ENCODE measurements at regions of chr1 and their contacts with region 1.

Region 1: DNA sequence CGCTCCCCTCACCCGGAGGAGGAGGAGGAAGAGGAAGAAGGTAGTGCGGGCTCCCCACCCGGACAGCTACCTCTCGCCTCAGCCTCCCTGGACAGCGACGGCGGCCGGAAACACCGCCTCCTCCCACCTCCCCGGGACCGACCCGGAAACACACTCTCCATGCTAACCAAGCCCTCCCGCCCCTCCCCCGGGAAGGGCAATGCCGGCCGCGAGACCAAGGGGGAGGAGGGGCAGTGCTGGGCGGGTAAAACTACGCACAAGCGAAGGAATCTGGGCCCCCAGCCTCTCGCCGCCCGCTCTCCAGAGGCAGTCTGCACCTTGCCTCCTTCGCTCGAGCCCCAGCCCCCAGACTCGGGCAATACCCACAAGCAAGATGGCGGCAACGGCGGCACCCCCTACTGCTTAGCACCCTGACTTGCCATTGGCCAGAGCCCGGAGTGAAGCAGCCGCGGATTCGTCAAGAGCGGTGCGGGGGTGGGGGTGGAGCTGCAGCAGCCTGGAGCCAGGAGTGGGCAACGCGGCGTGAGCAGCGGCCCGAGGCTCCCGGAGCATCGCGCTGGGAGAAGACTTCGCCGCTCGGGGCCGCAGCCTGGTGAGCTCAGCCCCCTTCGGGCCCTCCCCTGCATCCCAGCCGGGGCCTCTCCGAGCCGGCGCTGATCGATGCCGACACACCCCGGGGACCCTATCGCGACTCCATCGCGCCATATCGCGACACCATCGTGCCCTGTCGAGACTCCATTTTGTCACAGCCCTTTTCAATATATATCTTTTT is at the starts of genes KIAA0319L and NCDN:
- DNase-seq: peak; percentile 94
- H3K4me3 Mint-ChIP-seq: peak within 1 kb of the TSS; percentile 98
- H3K27ac Mint-ChIP-seq: peak within 1 kb of the TSS; percentile 96
- H3K4me1 Mint-ChIP-seq: peaks cover 68% of the 10 kb centered on the region
- H3K27me3 Mint-ChIP-seq: no peaks in the 10 kb centered on the region
- total RNA-seq, gene KIAA0319L: 42.5 and 43.6 TPM in 2 replicates
- total RNA-seq, gene NCDN: 43.8 and 45.1 TPM in 2 replicates

Region 2: DNA sequence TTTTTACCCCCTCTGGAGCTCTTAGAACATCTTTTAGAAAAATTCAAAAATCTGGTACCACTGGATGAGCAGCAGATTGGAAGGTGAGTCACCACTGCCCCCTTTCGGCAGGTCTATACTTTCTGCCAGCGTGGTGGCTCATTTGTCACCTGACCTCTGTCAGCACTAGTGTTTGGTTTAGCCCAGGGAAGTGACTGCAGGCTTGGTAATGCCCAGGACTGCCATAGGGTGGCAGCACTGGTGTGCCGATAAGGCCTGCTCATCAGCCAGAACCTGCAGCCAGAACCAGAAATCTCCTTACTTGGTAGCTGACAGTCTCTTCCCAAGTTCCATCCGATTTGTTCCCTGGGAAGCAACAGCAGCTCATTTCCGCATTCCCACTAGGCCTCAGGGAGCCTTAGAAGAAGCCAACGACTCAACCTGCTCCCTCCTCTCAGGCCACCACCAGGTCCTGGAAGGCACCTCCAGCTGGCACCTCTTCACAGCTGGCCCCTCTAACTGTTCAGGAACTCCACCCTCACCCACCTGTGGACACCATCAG is 704.7 kb before region 1 on chr1:
- intact Hi-C with region 1: loop called (anchors 10 kb)
- DNase-seq: peak; percentile 87
- H3K4me3 Mint-ChIP-seq: no peak overlapping the region
- H3K27ac Mint-ChIP-seq: no peak overlapping the region
- H3K4me1 Mint-ChIP-seq: peaks cover 18% of the 10 kb centered on the region
- H3K27me3 Mint-ChIP-seq: no peaks in the 10 kb centered on the region

Region 3: DNA sequence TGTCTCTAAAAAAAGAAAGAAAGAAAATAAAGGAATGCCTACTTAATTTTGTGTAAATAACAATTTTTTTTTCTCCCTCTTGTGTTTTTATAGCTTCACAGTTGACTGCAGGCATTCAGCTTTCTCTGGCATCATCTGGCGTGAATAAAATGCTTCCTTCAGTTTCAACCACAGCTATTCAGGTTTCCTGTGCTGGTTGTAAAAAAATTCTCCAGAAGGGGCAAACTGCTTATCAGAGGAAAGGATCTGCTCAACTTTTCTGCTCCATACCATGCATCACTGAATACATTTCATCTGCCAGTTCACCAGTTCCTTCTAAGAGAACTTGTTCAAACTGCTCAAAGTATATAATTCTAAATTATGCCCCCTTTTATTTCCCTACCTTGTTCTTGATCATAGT is 460.3 kb before region 1 on chr1:
- intact Hi-C with region 1: no loop called
- DNase-seq: no peak
- H3K4me3 Mint-ChIP-seq: no peak overlapping the region
- H3K27ac Mint-ChIP-seq: no peak overlapping the region
- H3K4me1 Mint-ChIP-seq: no peaks in the 10 kb centered on the region
- H3K27me3 Mint-ChIP-seq: peaks cover 1% of the 10 kb centered on the region

Region 4: DNA sequence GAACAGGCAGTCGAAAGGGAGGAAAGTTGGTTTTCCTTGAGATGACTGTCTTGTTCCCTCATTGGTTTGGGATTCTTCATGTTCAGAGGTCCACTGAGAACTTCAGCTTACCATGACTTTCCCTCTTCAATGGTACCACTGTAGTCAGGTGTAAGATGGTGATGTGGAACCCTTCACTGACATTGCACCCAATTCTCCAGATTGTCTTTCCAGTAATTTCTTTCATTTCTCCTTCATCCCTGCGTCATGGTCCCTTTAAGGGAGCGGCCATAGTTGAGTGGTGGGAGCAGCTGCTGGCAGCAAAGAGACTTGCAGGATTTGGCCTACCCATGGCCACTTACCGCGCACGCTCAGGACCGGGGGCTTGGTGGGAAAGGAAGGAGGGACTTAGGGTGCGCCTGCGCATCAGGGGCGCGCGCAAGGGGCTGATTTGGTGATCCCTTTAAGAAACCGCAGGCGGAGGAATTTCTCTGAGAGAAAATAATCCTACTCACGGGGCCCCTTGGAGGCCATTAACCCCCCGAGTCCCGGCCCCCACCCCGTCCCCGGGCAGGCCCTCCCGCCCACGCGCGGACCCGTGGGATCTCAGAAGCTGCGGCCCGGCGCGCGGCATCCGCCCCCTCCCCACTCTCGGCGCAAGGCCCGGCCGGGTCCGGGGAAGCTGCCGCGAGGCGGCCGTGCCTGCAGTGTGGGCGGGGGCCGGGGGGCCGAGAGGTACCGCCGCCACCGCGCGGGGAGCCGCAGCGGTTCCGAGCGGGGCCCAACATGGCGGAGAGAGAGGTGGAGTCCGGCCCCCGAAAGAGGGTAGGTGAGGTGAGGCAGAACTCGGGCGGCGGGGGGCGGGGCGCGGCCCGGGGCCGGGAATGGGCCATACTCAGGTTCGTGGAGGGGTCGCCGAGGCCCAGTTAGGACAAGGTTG is 288.9 kb before region 1 on chr1 and contains the start of gene ZMYM4:
- intact Hi-C with region 1: loop called (anchors 1 kb)
- DNase-seq: peak; percentile 88
- H3K4me3 Mint-ChIP-seq: peak within 1 kb of the TSS; percentile 87
- H3K27ac Mint-ChIP-seq: peak within 1 kb of the TSS; percentile 93
- H3K4me1 Mint-ChIP-seq: peaks cover 38% of the 10 kb centered on the region
- H3K27me3 Mint-ChIP-seq: no peaks in the 10 kb centered on the region
- total RNA-seq, gene ZMYM4: 25.1 and 33.0 TPM in 2 replicates

Region 5: DNA sequence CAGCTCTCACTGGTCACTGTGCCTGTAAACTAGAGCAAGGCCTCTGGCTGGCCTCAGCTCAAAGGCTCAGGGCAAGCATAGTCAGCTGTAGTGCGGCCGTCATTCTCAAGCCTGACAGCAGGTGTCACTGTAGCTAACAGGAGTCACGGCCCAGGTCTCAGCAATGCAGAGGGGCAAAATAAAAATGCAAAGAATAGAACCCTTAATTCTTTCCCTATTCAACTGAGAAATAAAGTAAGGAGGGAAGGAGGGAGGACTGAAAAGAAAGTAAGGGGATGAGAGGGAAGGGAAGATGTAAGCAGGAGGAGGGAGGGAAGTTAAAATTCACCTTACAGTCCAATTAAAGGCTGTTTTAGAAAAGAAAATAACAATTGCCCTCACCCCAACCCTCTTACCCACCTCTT is 106.4 kb before region 1 on chr1:
- intact Hi-C with region 1: loop called (anchors 1 kb)
- DNase-seq: peak; percentile 65
- H3K4me3 Mint-ChIP-seq: no peak overlapping the region
- H3K27ac Mint-ChIP-seq: peak overlapping the region; percentile 71
- H3K4me1 Mint-ChIP-seq: peaks cover 48% of the 10 kb centered on the region
- H3K27me3 Mint-ChIP-seq: no peaks in the 10 kb centered on the region

Region 6: GRCh38 chr1:35505908-35506798 is 51.3 kb before region 1 on chr1:
- intact Hi-C with region 1: loop called (anchors 1 kb)
- DNase-seq: peak; percentile 70
- H3K4me3 Mint-ChIP-seq: peak overlapping the region; percentile 69
- H3K27ac Mint-ChIP-seq: peak overlapping the region; percentile 94
- H3K4me1 Mint-ChIP-seq: peaks cover 76% of the 10 kb centered on the region
- H3K27me3 Mint-ChIP-seq: no peaks in the 10 kb centered on the region

Region 7: DNA sequence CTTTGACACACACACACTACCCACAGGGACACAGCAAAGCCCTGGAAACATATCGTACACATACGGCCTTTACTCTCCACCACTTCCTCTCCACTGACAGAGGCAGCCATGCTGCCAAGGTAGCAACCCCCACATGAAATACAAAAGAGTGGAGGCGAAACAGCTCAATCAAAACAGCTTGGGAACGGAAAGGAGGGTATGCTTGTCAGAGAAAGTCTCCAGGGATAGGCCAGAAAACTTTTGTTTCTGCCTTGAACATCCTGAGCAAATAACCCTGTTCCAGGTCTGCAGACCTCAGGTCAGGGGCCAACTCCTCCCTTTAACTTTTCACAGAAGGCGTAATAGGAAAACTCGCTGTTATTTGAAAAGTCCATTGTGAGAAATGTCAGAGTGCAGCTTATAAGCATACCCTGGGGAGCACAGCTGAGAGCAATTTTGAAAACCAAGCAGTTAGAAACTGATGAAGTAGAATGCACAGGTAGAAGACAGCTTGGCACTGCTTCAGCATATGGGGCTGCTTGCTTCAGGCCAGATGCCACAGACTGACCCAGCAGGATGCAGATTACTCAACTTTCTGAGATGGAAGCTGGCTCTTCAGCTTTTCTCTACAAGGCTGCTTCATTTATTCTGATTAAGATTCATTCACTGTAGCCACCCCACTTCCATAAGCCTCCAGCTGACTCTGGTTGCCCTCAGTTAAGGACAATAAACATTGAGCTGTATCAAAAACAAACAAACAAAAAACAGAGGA is 18.2 kb before region 1 on chr1:
- intact Hi-C with region 1: loop called (anchors 2 kb)
- DNase-seq: peak; percentile 46
- H3K4me3 Mint-ChIP-seq: peak overlapping the region; percentile 53
- H3K27ac Mint-ChIP-seq: peak overlapping the region; percentile 85
- H3K4me1 Mint-ChIP-seq: peaks cover 80% of the 10 kb centered on the region
- H3K27me3 Mint-ChIP-seq: no peaks in the 10 kb centered on the region

Region 8: DNA sequence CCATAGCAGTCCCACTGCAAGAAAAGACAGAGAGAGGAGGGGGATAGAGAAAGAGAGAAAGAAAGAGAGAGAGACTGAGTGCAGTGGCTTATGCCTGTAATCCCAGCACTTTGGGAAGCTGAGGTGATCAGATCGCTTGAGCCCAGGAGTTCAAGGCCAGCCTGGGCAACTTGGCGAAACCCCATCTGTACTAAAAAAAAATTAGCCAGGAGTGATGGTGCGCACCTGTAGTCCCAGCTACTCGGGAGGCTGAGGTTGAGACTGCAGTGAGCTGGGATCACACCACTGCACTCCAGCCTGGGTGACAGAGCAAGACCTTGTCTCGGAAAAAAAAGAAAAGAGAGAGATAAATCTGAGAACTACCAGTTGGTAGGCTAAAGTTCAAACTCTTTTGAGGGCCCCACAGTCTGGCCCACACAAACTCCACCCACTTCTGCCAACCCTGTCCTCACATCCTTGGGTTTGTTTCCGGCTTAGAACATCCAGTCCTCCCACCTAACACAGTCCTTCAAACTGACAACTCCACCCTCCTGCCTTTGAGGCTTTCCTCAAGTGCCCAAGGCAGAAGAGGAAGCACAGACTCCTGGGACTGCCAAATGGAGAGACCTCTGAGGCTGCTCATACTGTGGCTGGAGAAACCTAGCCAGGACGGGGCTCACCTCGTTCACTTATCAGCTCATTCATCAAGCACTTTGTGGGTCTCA is 35.7 kb after region 1 on chr1:
- intact Hi-C with region 1: no loop called
- DNase-seq: no peak
- H3K4me3 Mint-ChIP-seq: no peak overlapping the region
- H3K27ac Mint-ChIP-seq: peak overlapping the region; percentile 41
- H3K4me1 Mint-ChIP-seq: no peaks in the 10 kb centered on the region
- H3K27me3 Mint-ChIP-seq: no peaks in the 10 kb centered on the region

Region 9: GRCh38 chr1:35641233-35641866 is 83.9 kb after region 1 on chr1 and contains the start of gene PSMB2:
- intact Hi-C with region 1: loop called (anchors 5 kb)
- DNase-seq: peak; percentile 95
- H3K4me3 Mint-ChIP-seq: peak within 1 kb of the TSS; percentile 99
- H3K27ac Mint-ChIP-seq: peak within 1 kb of the TSS; percentile 99
- H3K4me1 Mint-ChIP-seq: peaks cover 40% of the 10 kb centered on the region
- H3K27me3 Mint-ChIP-seq: peaks cover 26% of the 10 kb centered on the region
- total RNA-seq, gene PSMB2: 125 and 126 TPM in 2 replicates

Region 10: DNA sequence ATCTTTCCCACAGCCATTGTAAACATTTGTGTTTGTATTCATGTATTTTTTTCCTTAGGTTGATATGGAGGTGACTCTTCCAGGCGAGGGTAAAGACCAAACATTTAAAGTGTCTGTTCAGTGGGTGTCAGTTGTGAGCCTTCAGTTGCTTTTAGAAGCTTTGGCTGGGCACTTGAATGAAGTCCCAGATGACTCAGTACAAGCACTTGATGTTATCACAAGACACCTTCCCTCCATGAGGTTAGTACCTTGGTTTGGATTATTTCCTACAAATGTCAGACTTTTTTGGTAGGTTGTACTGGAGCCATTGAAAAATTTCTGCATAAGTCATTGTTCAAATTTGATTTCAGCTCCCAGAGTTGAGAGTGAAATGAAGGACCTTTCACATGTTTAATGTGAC is 267.8 kb after region 1 on chr1:
- intact Hi-C with region 1: no loop called
- DNase-seq: no peak
- H3K4me3 Mint-ChIP-seq: no peak overlapping the region
- H3K27ac Mint-ChIP-seq: no peak overlapping the region
- H3K4me1 Mint-ChIP-seq: no peaks in the 10 kb centered on the region
- H3K27me3 Mint-ChIP-seq: peaks cover 3% of the 10 kb centered on the region